Caco-2 (cell line): ENCODE measurements at regions of chr13 and their contacts with region 1.

Region 1: DNA sequence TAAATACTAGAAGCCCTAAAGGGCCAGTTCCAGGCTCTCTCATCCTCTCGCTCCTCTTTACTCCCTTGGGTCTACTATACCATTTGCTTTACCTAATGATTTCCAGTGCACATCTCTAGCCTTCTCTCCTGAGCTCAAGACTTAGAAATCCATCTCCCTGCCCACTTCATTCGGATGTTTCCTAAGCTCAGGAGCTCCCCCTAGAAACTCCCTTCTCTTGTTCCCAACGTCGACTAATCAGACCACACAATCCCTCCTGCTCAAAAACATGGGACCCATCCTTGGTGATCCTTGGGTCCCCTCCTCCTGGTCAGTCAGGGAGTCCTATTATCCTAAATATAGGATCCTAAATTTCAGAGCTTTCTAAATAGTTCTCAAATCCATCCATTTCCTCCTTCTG is 21.1 kb upstream of the STK24 start:
- DNase-seq: no peak
- H3K4me3 ChIP-seq: no peak overlapping the region
- H3K4me3 Mint-ChIP-seq: no peak overlapping the region
- H3K27ac Mint-ChIP-seq: peak overlapping the region; percentile 72
- H3K4me1 ChIP-seq: peaks cover 45% of the 10 kb centered on the region
- H3K4me1 Mint-ChIP-seq: peaks cover 59% of the 10 kb centered on the region
- H3K27me3 ChIP-seq: no peaks in the 10 kb centered on the region
- H3K27me3 Mint-ChIP-seq: no peaks in the 10 kb centered on the region
- CTCF ChIP-seq: peak in 1 of 2 experiments; percentile 8

Region 2: GRCh38 chr13:98576963-98577822 is 20.9 kb before region 1 on chr13 and contains the start of gene STK24:
- CTCF ChIA-PET with region 1: interaction called, 5 read pairs
- POLR2A ChIA-PET with region 1: interaction called, 3 read pairs
- intact Hi-C with region 1: loop called (anchors 2 kb)
- DNase-seq: peak; percentile 65 to 92
- H3K4me3 ChIP-seq: peak within 1 kb of the TSS; percentile 92
- H3K4me3 Mint-ChIP-seq: peak within 1 kb of the TSS; percentile 95
- H3K27ac Mint-ChIP-seq: peak within 1 kb of the TSS; percentile 97
- H3K4me1 ChIP-seq: peaks cover 61% of the 10 kb centered on the region
- H3K4me1 Mint-ChIP-seq: peaks cover 63% of the 10 kb centered on the region
- H3K27me3 ChIP-seq: no peaks in the 10 kb centered on the region
- H3K27me3 Mint-ChIP-seq: no peaks in the 10 kb centered on the region
- CTCF ChIP-seq: no peak
- total RNA-seq, gene STK24: 244 and 253 TPM in 2 replicates

Region 3: GRCh38 chr13:98648141-98648540 is 50.1 kb after region 1 on chr13:
- CTCF ChIA-PET with region 1: interaction called, 5 read pairs
- POLR2A ChIA-PET with region 1: interaction called, 3 read pairs
- intact Hi-C with region 1: loop called (anchors 1 kb)
- DNase-seq: peak; percentile 76 to 81
- H3K4me3 ChIP-seq: no peak overlapping the region
- H3K4me3 Mint-ChIP-seq: peak overlapping the region; percentile 52
- H3K27ac Mint-ChIP-seq: peak overlapping the region; percentile 96
- H3K4me1 ChIP-seq: peaks cover 71% of the 10 kb centered on the region
- H3K4me1 Mint-ChIP-seq: peaks cover 57% of the 10 kb centered on the region
- H3K27me3 ChIP-seq: no peaks in the 10 kb centered on the region
- H3K27me3 Mint-ChIP-seq: no peaks in the 10 kb centered on the region
- CTCF ChIP-seq: no peak